Activated B cell treated with CpG ODN at 0.5 μM for 24 hours (primary cell): ENCODE measurements at regions of chrX and their contacts with region 1.

Region 1: DNA sequence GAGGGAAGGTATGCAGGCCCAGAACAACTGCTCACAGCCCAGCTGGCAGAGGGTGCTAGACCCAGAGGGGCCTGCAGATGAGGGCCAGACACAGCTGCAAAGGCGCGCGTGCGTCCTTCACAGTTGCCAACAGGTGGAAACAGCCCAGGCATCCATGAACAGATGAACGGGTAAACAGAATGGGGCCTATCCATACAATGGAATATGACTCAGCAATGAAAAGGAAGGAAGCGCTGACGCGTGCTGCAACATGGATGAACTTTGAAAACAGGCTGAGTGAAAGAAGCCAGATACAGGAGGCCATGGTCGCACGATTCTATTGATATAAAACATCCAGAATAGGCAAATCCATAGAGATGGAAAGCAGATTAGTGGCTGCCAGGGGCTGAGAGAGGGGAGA is 83.1 kb upstream of the DDX3X start:
- DNase-seq: no peak
- ATAC-seq: no peak
- H3K4me3 Mint-ChIP-seq: no peak overlapping the region
- H3K27ac Mint-ChIP-seq: no peak overlapping the region
- H3K4me1 Mint-ChIP-seq: peaks cover 7% of the 10 kb centered on the region
- H3K27me3 Mint-ChIP-seq: no peaks in the 10 kb centered on the region
- CTCF ChIP-seq: no peak

Region 2: DNA sequence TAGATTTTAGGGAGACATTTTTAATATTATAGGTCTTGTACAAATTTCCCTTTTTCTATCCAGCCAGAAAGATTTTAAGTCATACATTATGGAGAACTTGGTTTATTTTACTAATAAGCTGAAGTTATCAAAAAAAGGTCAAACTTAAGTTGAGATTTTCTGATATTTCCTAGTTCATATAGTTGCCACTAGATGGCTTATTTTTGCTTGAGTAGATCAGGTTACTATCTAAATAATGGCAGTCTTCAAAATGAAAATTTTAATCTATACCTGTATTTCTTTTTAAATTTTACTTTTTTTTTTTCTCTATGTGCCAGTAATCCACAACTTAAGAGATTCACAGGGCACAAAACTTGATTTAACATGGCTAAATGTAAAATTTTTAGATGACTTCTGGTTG is 113.3 kb before region 1 on chrX:
- CTCF ChIA-PET with region 1: no interaction called
- POLR2A ChIA-PET with region 1: no interaction called
- intact Hi-C with region 1: loop called (anchors 5 kb)
- DNase-seq: no peak
- ATAC-seq: no peak
- H3K4me3 Mint-ChIP-seq: no peak overlapping the region
- H3K27ac Mint-ChIP-seq: no peak overlapping the region
- H3K4me1 Mint-ChIP-seq: no peaks in the 10 kb centered on the region
- H3K27me3 Mint-ChIP-seq: no peaks in the 10 kb centered on the region
- CTCF ChIP-seq: no peak